Mucosa of descending colon (tissue), 3 donors: ENCODE measurements at regions of chr10 and their contacts with region 1.

Region 1: GRCh38 chr10:4512671-4513240 is 313.3 kb upstream of the AKR1E2 start:
- DNase-seq: peak in 1 of 3 donors; percentile 69
- ATAC-seq: peak; percentile 60
- H3K4me3 ChIP-seq: no peak overlapping the region
- H3K4me1 ChIP-seq: no peaks in the 10 kb centered on the region
- CTCF ChIP-seq: peak; percentile 12

Region 2: GRCh38 chr10:4649886-4650508 is 137.2 kb after region 1 on chr10:
- intact Hi-C with region 1: loop called in 1 of 2 experiments (anchors 10 kb)
- DNase-seq: no peak
- ATAC-seq: no peak
- H3K4me3 ChIP-seq: no peak overlapping the region
- H3K4me1 ChIP-seq: no peaks in the 10 kb centered on the region
- CTCF ChIP-seq: no peak